ENCODE measurements at regions of chr11 and their contacts with region 1.

Region 1: GRCh38 chr11:56509439-56509838 is 18.3 kb upstream of the OR5M8 start:
- DNase-seq: peak; percentile 38
- H3K4me3 ChIP-seq: no peak overlapping the region
- H3K27ac ChIP-seq: no peak overlapping the region
- H3K4me1 ChIP-seq: no peaks in the 10 kb centered on the region
- H3K27me3 ChIP-seq: no peaks in the 10 kb centered on the region
- CTCF ChIP-seq: no peak

Region 2: DNA sequence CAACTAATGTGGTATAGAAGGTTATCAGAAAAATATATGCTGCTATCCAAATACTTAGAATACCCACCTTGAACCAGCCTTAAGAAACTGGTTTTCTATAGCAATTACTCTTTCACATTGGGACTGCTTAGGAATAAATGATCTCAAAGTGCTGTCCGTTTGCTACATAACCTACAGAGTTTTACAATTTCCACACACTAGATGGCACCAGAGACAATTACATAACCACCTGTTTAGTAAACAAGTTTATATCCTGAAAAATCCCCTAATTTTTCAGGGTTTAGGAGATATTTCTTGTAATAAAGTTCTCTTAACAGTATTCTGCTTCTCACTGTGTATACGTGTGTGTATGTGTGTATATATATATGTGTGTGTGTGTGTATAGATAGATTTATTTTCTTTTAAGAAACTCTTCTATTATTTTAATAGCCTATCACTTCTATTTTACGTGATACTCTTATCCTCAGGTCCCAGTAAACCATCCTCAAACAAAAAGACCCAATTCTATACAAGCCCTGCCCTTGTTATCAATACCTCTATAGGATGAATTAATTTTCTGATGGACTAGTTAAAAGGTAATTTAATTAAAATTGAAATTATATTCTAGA is 566.5 kb before region 1 on chr11:
- intact Hi-C with region 1: loop called (anchors 10 kb)
- DNase-seq: no peak
- H3K4me3 ChIP-seq: no peak overlapping the region
- H3K27ac ChIP-seq: no peak overlapping the region
- H3K4me1 ChIP-seq: no peaks in the 10 kb centered on the region
- H3K27me3 ChIP-seq: no peaks in the 10 kb centered on the region
- CTCF ChIP-seq: peak; percentile 39

Region 3: DNA sequence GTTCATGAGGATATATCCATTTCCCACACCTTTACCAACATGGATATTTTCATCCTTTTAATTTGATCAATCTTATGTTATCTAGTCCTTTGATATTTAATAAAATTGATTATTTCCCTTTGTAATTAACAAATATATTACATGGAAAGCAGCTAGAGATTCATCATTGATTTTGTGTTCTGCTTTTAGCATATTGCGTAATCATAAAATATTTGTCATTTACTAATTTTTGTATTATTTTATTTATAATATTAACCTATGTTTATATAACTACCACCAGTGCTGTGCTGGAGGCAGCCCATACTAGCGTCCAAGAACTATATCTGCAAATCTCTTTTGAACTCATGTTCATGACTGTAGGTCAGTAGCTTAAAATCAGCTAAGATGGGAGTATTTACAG is 129.3 kb before region 1 on chr11:
- intact Hi-C with region 1: loop called (anchors 5 kb)
- DNase-seq: no peak
- H3K4me3 ChIP-seq: no peak overlapping the region
- H3K27ac ChIP-seq: no peak overlapping the region
- H3K4me1 ChIP-seq: no peaks in the 10 kb centered on the region
- H3K27me3 ChIP-seq: no peaks in the 10 kb centered on the region
- CTCF ChIP-seq: no peak

Region 4: DNA sequence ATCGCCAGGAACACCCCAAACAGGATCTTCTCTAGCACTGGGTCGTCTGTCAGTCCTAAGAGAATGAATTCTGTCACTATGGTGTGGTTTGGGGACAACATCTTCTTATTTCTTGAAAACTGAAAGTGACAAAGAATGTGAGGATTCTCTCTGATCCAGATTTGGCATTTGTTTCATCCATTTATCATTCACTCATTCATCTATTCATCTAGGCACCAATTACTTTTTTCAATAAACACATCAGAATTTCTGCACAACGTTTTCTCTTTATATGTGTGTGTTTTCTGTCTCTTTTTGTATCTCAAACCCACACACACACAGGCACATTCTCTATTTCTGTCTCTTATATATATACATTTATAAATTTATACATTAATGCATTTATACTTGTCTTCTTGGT is 68.2 kb after region 1 on chr11 and contains the start of gene OR5M10:
- intact Hi-C with region 1: no loop called
- DNase-seq: no peak
- H3K4me3 ChIP-seq: no peak within 1 kb of the TSS
- H3K27ac ChIP-seq: no peak within 1 kb of the TSS
- H3K4me1 ChIP-seq: no peaks in the 10 kb centered on the region
- H3K27me3 ChIP-seq: no peaks in the 10 kb centered on the region
- CTCF ChIP-seq: no peak
- total RNA-seq, gene OR5M10: not detected

Measured in colonic mucosa (tissue), 4 donors.